IMR-90 (cell line): ENCODE measurements at regions of chr10 and their contacts with region 1.

Region 1: DNA sequence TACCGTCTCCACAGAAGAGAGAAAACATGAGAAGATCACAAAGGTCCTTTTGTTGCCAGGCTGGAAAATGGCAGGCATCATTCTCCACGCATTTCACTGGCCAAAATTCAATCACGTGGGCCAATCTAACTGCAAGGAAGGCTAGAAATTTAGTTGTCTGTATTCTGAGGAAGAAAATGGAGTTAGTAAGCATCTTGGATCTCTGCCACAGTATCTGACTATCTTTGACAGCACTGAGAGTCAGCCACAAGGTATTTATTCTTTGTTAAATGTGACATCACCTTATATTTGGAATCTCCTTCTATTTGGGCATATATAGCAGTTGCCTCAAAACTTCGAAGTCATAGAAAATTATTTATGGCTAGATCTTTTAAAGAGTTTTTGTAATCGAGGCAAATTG is 213.9 kb downstream of the NSUN6 start:
- DNase-seq: peak; percentile 58
- ATAC-seq: no peak
- H3K4me3 ChIP-seq: no peak overlapping the region
- H3K27ac ChIP-seq: no peak overlapping the region
- H3K4me1 ChIP-seq: peaks cover 2% of the 10 kb centered on the region; the same call in 1 of the 2 replicates
- H3K27me3 ChIP-seq: no peaks in the 10 kb centered on the region
- CTCF ChIP-seq: no peak
- POLR2A ChIP-seq: no peak
- RAD21 ChIP-seq: no peak

Region 2: GRCh38 chr10:17474595-17475323 is 962.7 kb before region 1 on chr10:
- CTCF ChIA-PET with region 1: no interaction called
- POLR2A ChIA-PET with region 1: no interaction called
- dilution Hi-C with region 1: no loop called
- in situ Hi-C with region 1: no loop called
- intact Hi-C with region 1: loop called (anchors 5 kb)
- DNase-seq: peak; percentile 11
- ATAC-seq: peak; percentile 51
- H3K4me3 ChIP-seq: no peak overlapping the region
- H3K27ac ChIP-seq: no peak overlapping the region
- H3K4me1 ChIP-seq: 0 out of 2 replicates have a peak, but pooled peaks cover 3% of the 10 kb centered on the region
- H3K27me3 ChIP-seq: no peaks in the 10 kb centered on the region
- CTCF ChIP-seq: peak; percentile 27; the same call in 1 of the 2 replicates
- POLR2A ChIP-seq: no peak
- RAD21 ChIP-seq: no peak

Region 3: GRCh38 chr10:18469125-18469524 is 31.6 kb after region 1 on chr10:
- CTCF ChIA-PET with region 1: no interaction called
- POLR2A ChIA-PET with region 1: no interaction called
- dilution Hi-C with region 1: no loop called
- in situ Hi-C with region 1: no loop called
- intact Hi-C with region 1: loop called (anchors 5 kb)
- DNase-seq: no peak
- ATAC-seq: no peak
- H3K4me3 ChIP-seq: no peak overlapping the region
- H3K27ac ChIP-seq: no peak overlapping the region
- H3K4me1 ChIP-seq: peaks cover 5% of the 10 kb centered on the region; the same call in 1 of the 2 replicates
- H3K27me3 ChIP-seq: no peaks in the 10 kb centered on the region
- CTCF ChIP-seq: no peak
- POLR2A ChIP-seq: no peak
- RAD21 ChIP-seq: no peak

Region 4: DNA sequence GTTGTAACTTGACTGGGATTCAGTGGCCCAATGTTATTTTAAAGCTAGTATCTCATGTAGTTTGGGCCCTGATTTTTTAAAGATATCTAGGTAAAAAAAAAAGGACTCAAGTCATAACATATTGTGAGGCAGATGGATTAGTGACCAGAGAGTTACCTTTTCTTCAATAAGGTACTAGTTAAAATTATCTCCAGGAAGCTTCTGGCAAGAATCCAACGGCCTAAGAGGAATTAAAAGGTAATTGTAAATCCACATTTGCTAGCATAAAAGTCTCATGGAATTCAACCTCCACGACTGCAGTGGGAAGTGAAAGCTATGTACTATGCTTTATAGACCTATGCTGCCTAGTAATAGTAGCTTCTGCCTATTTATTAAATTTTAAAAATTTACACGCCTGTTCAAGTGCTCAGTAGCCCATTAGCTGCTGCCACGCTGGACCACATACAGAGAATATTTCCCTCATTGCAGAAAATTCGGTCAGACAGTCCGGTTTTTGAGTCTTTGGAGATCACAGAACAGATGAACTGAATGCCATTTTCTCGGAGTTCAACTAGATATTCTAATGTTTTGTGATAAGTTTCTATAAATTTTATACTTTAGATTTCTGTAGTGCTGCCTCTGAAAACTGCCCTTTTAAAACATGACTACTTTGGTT is 95.5 kb after region 1 on chr10:
- CTCF ChIA-PET with region 1: no interaction called
- POLR2A ChIA-PET with region 1: no interaction called
- dilution Hi-C with region 1: no loop called
- in situ Hi-C with region 1: no loop called
- intact Hi-C with region 1: no loop called
- DNase-seq: no peak
- ATAC-seq: no peak
- H3K4me3 ChIP-seq: no peak overlapping the region
- H3K27ac ChIP-seq: no peak overlapping the region
- H3K4me1 ChIP-seq: peaks cover 5% of the 10 kb centered on the region
- H3K27me3 ChIP-seq: no peaks in the 10 kb centered on the region
- CTCF ChIP-seq: no peak
- POLR2A ChIP-seq: no peak
- RAD21 ChIP-seq: no peak